ENCODE measurements at regions of chr3 and their contacts with region 1.

Region 1: DNA sequence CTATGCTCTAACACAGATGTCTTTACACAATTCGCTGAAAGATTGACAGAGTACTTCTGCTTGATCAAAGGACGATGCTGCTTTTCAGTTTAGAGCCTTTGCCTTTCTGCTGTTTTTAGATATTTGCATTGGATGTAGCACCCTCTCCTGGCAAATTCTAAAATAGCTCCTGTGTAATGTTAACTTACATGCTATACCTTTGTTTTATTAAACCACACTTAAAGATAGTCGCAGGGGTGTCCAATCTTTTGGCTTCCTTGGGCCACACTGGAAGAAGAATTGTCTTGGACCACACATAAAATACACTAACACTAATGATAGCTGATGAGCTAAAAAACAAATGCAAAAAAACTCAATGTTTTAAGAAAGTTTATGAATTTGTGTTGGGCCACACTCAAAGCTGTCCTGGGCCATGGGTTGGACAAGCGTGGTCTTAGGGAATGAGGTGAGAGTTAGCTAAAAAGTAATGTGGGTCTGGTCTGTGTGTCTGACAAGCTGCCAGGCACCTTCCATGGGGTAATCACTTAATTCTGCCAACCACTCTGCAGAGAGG is 62.9 kb downstream of the ATG7 start:
- DNase-seq: peak; percentile 28
- H3K4me3 ChIP-seq: no peak overlapping the region
- CTCF ChIP-seq: peak; percentile 45

Region 2: DNA sequence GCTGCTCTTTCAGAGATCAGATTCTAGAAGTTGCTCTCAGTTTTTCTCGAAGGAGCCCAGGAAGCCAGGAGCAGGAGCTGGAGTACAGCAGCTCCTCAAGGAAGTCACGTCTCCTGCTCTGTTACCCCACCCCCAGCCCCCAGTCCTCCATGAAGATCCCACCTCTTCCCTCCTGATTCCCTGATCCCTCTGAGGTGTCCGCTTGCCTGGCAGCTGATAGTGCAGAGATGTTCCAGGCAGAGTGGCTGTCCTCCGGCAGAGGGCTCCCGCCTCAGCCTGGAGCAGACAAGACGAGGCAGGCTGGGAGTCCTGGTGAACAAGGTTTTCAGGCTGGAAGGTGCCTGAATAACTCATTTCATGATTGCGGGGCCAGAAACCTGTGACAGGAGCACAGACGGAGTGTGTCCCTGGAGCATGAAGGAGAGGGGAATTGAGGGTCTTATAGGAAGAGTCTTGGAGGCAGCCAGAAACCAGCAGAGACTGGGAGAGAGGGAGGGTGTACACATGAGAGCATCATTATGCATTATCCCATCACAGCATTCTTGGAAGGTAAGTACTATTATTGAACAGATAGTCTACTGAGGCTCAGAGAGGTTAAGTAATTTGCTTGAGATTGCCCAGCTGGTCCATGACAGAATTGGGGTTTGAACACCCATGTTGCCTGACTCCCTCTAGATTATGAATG is 179.6 kb before region 1 on chr3:
- CTCF ChIA-PET with region 1: interaction called, 168 read pairs
- POLR2A ChIA-PET with region 1: no interaction called
- DNase-seq: no peak
- H3K4me3 ChIP-seq: peak overlapping the region; percentile 80
- CTCF ChIP-seq: peak; percentile 97

Region 3: GRCh38 chr3:11236595-11237461 is 98.3 kb before region 1 on chr3:
- CTCF ChIA-PET with region 1: interaction called, 42 read pairs
- POLR2A ChIA-PET with region 1: no interaction called
- DNase-seq: no peak
- H3K4me3 ChIP-seq: no peak overlapping the region
- CTCF ChIP-seq: peak; percentile 52

Region 4: DNA sequence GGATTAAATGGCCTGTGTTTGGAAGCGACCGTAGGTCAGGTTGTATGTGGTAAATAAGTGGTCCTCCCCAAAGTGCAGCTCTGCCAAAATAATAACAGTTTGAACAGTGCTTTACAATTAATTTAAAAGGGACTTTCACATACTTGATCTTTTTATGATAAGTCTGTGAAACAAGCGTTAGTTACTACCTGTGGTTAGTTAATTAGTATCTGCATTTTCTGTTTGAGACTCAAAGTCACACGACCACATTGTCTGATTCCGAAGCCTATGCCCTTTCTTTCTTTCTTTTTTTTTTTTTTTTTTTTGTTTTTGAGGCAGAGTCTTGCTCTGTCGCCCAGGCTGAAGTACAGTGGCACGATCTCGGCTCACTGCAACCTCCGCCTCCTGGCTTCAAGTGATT is 17.8 kb before region 1 on chr3:
- CTCF ChIA-PET with region 1: interaction called, 22 read pairs
- POLR2A ChIA-PET with region 1: no interaction called
- DNase-seq: no peak
- H3K4me3 ChIP-seq: no peak overlapping the region
- CTCF ChIP-seq: no peak

Region 5: DNA sequence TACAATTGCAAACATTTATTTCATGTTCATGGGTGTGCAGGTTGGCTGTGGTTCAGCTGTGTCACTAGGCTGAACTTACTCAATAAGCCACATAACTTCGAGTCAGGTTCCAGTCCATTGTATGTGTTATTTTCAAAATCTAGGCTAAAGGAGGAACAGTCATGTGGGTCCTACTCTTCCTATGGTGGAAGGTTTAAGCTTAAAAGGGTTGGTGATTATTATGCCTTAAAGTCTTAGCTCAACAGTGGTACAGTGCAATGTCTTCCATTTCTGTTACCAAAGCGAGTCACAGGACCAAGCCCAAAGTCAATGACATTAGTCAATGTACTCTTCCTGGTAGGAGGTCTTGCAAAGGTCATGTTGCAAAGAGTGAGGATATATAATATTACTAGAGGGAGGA is 15.2 kb after region 1 on chr3:
- CTCF ChIA-PET with region 1: interaction called, 31 read pairs
- POLR2A ChIA-PET with region 1: no interaction called
- DNase-seq: no peak
- H3K4me3 ChIP-seq: no peak overlapping the region
- CTCF ChIP-seq: no peak

Region 6: DNA sequence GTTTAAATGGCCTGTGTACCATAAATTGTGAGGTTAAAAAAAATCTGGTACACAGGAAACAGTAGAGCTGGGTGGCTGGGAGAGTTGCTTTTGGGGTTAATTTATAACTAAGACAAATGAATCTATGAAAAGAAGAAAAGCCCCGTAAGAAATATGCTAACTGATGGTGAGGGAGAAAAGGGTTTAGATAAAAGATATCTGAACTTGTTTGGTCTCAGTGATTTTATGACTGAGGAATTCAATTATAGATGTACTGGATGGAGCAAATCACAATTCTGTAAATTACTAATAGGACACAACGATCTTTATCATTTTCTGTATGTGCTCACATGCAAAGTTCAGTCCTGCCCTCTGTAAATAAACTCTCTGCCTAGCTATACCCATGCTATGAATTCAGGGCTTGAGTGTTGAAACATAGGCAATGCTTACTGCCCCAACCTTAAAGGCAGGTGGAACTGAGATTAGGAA is 981.7 kb after region 1 on chr3:
- CTCF ChIA-PET with region 1: no interaction called
- POLR2A ChIA-PET with region 1: no interaction called
- DNase-seq: no peak
- H3K4me3 ChIP-seq: no peak overlapping the region
- CTCF ChIP-seq: no peak

Measured in AG04449 (cell line).